Mammary epithelial cell (primary cell): ENCODE measurements at regions of chr16 and their contacts with region 1.

Region 1: GRCh38 chr16:3358884-3359283 is 3.2 kb downstream of the OR2C1 start:
- DNase-seq: no peak
- H3K4me3 ChIP-seq: no peak overlapping the region
- H3K27ac ChIP-seq: no peak overlapping the region
- H3K4me1 ChIP-seq: no peaks in the 10 kb centered on the region
- H3K27me3 ChIP-seq: no peaks in the 10 kb centered on the region
- CTCF ChIP-seq: no peak

Region 2: GRCh38 chr16:3266873-3267537 is 91.9 kb before region 1 on chr16:
- CTCF ChIA-PET with region 1: no interaction called
- dilution Hi-C with region 1: no loop called
- in situ Hi-C with region 1: no loop called
- intact Hi-C with region 1: no loop called
- DNase-seq: peak; percentile 26
- H3K4me3 ChIP-seq: no peak overlapping the region
- H3K27ac ChIP-seq: no peak overlapping the region
- H3K4me1 ChIP-seq: peaks cover 7% of the 10 kb centered on the region
- H3K27me3 ChIP-seq: no peaks in the 10 kb centered on the region
- CTCF ChIP-seq: peak; percentile 42 to 50

Region 3: GRCh38 chr16:3317315-3317999 is 41.4 kb before region 1 on chr16:
- CTCF ChIA-PET with region 1: no interaction called
- dilution Hi-C with region 1: loop called (anchors 5 kb)
- in situ Hi-C with region 1: no loop called
- intact Hi-C with region 1: no loop called
- DNase-seq: no peak
- H3K4me3 ChIP-seq: no peak overlapping the region
- H3K27ac ChIP-seq: no peak overlapping the region
- H3K4me1 ChIP-seq: no peaks in the 10 kb centered on the region
- H3K27me3 ChIP-seq: no peaks in the 10 kb centered on the region
- CTCF ChIP-seq: no peak

Region 4: DNA sequence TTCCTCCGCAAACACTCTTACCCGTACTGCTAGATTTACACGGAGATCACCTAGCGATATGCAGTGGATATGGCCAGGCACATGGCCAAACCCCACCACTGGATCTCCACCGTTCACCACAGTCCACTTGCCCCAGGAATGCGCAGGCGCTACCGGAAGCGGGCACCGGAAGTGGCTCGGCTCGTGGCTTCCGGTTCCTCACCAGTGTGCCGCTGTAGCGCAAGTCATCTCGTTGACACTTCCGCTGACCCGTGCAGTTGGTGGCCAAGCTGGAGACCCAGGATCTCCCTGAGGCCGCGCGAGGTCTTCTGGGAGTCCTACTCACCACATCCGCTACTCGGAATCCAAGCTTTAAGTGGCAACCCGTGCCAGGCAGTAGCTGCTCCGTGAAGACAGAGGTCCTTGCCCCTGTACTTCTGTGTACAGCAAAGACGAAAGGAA is 72.9 kb after region 1 on chr16:
- CTCF ChIA-PET with region 1: no interaction called
- dilution Hi-C with region 1: loop called (anchors 10 kb)
- in situ Hi-C with region 1: no loop called
- intact Hi-C with region 1: no loop called
- DNase-seq: no peak
- H3K4me3 ChIP-seq: no peak overlapping the region
- H3K27ac ChIP-seq: no peak overlapping the region
- H3K4me1 ChIP-seq: no peaks in the 10 kb centered on the region
- H3K27me3 ChIP-seq: no peaks in the 10 kb centered on the region
- CTCF ChIP-seq: no peak

Region 5: DNA sequence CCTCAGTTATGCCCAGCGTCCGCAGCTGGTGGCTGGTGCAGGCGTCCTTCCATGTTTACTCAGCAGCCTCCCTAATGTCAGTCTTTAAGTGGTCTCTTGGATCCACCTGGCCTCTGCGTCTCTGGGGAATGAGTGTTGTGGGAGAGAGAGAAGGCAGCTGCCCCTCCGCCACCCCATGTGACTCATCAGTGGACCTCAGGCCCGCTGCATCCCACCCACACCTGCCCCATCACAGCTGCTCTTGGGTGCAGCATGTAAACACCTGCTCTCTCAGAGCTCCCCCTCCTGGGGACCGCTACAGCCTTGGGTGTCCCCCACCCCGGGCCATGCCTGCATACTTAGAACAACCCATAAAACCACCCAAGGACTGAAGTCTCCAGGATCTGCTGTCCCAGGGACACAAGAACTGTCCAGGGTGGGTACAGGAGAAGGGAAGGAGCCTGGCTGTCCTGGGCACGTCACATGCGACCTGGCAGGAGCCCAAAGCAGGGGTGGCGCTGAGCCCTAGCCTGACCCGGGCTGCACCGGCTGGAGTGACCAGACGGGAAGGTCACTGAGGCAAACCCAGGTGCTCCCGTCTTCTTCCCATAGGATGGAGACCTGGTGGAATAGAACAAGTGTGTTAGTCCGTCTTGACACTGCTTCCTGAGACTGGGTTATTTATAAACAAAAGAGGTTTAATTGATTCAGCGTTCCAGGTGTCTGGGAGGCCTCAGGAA is 132.2 kb after region 1 on chr16:
- CTCF ChIA-PET with region 1: no interaction called
- dilution Hi-C with region 1: no loop called
- in situ Hi-C with region 1: no loop called
- intact Hi-C with region 1: no loop called
- DNase-seq: no peak
- H3K4me3 ChIP-seq: no peak overlapping the region
- H3K27ac ChIP-seq: no peak overlapping the region
- H3K4me1 ChIP-seq: no peaks in the 10 kb centered on the region
- H3K27me3 ChIP-seq: no peaks in the 10 kb centered on the region
- CTCF ChIP-seq: no peak